B cell (primary cell): ENCODE measurements at regions of chr4 and their contacts with region 1.

Region 1: GRCh38 chr4:73653695-73654106 is 33.5 kb upstream of the RASSF6 start:
- DNase-seq: peak; percentile 69
- ATAC-seq: peak; percentile 75
- H3K4me3 ChIP-seq: no peak overlapping the region
- H3K4me3 Mint-ChIP-seq: no peak overlapping the region
- H3K27ac ChIP-seq: no peak overlapping the region
- H3K27ac Mint-ChIP-seq: no peak overlapping the region
- H3K4me1 ChIP-seq: no peaks in the 10 kb centered on the region
- H3K4me1 Mint-ChIP-seq: peaks cover 2% of the 10 kb centered on the region
- H3K27me3 ChIP-seq: no peaks in the 10 kb centered on the region
- H3K27me3 Mint-ChIP-seq: no peaks in the 10 kb centered on the region
- CTCF ChIP-seq: peak; percentile 81

Region 2: DNA sequence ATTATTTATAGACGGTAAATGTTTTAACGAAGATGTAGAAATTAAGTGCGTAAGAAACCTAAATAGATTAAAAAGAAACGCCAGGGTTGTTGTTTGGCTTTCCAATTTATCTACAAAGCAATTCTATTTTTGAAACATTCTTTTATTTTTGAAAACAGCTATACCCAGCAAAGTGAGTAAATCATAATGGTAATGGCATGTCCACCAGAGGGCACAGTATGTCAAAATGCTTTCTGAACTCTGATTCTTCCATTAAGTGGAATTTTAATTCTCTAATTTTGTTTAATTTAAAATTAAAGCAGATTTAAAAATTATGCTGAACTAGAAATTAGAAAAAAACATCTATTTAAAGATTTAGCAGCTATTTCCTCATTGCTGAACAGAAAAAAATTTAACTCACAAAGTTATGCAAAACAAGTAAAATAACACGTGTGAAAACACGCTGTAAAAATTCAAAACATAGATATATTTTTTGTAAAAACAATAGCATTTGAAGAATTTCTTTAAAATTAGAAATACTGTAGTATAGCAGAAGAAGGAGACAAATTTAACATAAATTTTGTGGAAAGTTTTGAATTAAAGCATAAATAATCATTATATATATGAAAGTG is 60.0 kb before region 1 on chr4:
- CTCF ChIA-PET with region 1: interaction called, 64 read pairs
- POLR2A ChIA-PET with region 1: no interaction called
- intact Hi-C with region 1: loop called (anchors 1 kb)
- DNase-seq: peak; percentile 32
- ATAC-seq: no peak
- H3K4me3 ChIP-seq: no peak overlapping the region
- H3K4me3 Mint-ChIP-seq: no peak overlapping the region
- H3K27ac ChIP-seq: no peak overlapping the region
- H3K27ac Mint-ChIP-seq: no peak overlapping the region
- H3K4me1 ChIP-seq: peaks cover 12 to 16% of the 10 kb centered on the region in 2 donors
- H3K4me1 Mint-ChIP-seq: peaks cover 43% of the 10 kb centered on the region
- H3K27me3 ChIP-seq: no peaks in the 10 kb centered on the region
- H3K27me3 Mint-ChIP-seq: no peaks in the 10 kb centered on the region
- CTCF ChIP-seq: peak; percentile 70

Region 3: DNA sequence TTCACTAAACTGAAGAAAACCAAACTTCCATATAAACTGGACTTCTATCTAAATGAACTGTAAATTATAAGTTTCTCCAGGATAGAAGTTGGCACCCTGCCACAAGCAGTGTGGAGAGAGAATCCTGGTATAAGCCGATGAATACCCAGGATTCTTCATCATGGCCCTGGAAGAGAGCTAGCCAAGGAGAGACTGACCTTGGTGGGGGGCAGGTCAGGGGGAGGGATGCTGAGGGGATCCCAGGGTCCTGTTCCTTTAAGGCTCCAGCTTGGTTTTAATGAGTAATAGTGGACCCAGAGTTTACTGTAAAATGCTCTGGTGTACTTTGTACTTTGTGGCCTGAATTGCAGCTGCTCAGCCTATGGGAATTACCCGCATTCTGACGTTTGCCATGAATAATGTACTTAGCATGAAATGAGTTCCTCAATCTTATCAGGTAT is 50.4 kb before region 1 on chr4:
- CTCF ChIA-PET with region 1: interaction called, 6 read pairs
- POLR2A ChIA-PET with region 1: no interaction called
- intact Hi-C with region 1: loop called (anchors 5 kb)
- DNase-seq: peak; percentile 45
- ATAC-seq: peak; percentile 19
- H3K4me3 ChIP-seq: no peak overlapping the region
- H3K4me3 Mint-ChIP-seq: peak overlapping the region; percentile 44
- H3K27ac ChIP-seq: no peak overlapping the region
- H3K27ac Mint-ChIP-seq: no peak overlapping the region
- H3K4me1 ChIP-seq: peaks cover 32 to 37% of the 10 kb centered on the region in 2 donors
- H3K4me1 Mint-ChIP-seq: peaks cover 53% of the 10 kb centered on the region
- H3K27me3 ChIP-seq: no peaks in the 10 kb centered on the region
- H3K27me3 Mint-ChIP-seq: no peaks in the 10 kb centered on the region
- CTCF ChIP-seq: no peak